GM12878 (cell line): ENCODE measurements at regions of chr12 and their contacts with region 1.

Region 1: GRCh38 chr12:69254046-69254445 is 14.7 kb downstream of the CPSF6 start:
- DNase-seq: peak; percentile 51
- ATAC-seq: peak; percentile 83
- H3K4me3 ChIP-seq: no peak overlapping the region
- H3K27ac ChIP-seq: no peak overlapping the region
- H3K4me1 ChIP-seq: no peaks in the 10 kb centered on the region
- H3K27me3 ChIP-seq: no peaks in the 10 kb centered on the region
- CTCF ChIP-seq: peak; percentile 51 to 77 (median 64); a peak in 5 of 6 replicates
- EP300 ChIP-seq: no peak
- POLR2A ChIP-seq: no peak
- RAD21 ChIP-seq: peak; percentile 76

Region 2: DNA sequence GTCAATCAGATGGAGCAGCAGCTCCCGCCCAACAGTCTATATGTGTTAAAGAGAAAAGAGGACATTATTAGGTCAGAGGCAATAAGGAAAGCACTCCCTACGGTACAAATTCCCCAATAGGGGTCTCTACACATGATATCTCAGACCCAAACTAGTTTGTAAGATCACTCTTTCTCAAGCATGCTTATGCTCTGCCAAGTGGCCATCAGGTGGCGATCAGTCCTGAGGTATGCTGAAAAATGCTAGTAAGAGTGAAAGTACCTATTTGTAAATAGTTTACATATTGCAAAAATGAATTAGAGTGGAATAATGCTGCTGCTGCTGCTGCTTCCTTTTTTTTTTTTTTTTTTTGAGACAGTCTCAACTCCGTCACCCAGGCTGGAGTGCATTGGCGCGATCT is 382.1 kb before region 1 on chr12:
- CTCF ChIA-PET with region 1: interaction called, 4 read pairs
- POLR2A ChIA-PET with region 1: no interaction called
- RAD21 ChIA-PET with region 1: no interaction called
- SMC1A ChIA-PET with region 1: interaction called, 3 read pairs
- in situ Hi-C with region 1: no loop called
- intact Hi-C with region 1: loop called (anchors 10 kb)
- DNase-seq: no peak
- ATAC-seq: peak; percentile 62; the same call in 2 of the 3 replicates
- H3K4me3 ChIP-seq: no peak overlapping the region
- H3K27ac ChIP-seq: no peak overlapping the region
- H3K4me1 ChIP-seq: no peaks in the 10 kb centered on the region
- H3K27me3 ChIP-seq: no peaks in the 10 kb centered on the region
- CTCF ChIP-seq: peak; percentile 29 to 48 (median 37); a peak in 4 of 6 replicates
- EP300 ChIP-seq: no peak
- POLR2A ChIP-seq: no peak
- RAD21 ChIP-seq: peak; percentile 52

Region 3: DNA sequence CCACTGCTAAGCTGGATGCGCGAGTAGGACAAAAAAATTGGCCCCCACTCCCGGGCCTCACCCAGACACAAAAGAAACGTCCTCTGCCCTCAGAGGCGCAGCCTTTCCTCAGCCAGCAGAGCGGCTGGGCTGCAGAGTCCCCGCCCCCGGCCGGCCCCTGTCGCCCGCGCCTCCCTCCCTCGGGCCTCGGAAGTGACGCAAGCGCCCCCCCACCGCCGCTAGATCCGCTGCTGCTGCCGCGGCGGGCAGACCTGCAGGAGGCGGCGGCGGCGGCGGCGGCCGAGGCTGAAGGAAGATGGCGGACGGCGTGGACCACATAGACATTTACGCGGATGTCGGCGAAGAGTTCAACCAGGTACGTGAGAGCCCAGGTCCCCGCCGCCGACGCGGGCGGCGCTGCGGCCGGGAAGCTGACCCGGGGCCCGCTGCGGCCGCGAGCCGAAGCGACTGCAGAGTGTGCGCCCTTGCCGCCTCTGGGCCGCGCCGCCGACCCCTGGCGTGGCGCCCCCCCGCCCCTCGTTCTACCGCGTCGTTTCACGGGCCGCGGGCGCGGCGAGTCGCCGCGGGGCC is 14.6 kb before region 1 on chr12 and contains the start of gene CPSF6:
- CTCF ChIA-PET with region 1: interaction called, 70 read pairs
- POLR2A ChIA-PET with region 1: interaction called, 8 read pairs
- RAD21 ChIA-PET with region 1: interaction called, 15 read pairs
- SMC1A ChIA-PET with region 1: interaction called, 51 read pairs
- in situ Hi-C with region 1: no loop called
- intact Hi-C with region 1: no loop called
- DNase-seq: peak; percentile 62
- ATAC-seq: peak; percentile 89
- H3K4me3 ChIP-seq: peak within 1 kb of the TSS; percentile 98
- H3K27ac ChIP-seq: peak within 1 kb of the TSS; percentile 81
- H3K4me1 ChIP-seq: peaks cover 14% of the 10 kb centered on the region
- H3K27me3 ChIP-seq: no peaks in the 10 kb centered on the region
- CTCF ChIP-seq: no peak
- EP300 ChIP-seq: no peak
- POLR2A ChIP-seq: peak; percentile 91
- RAD21 ChIP-seq: no peak
- polyA plus RNA-seq, gene CPSF6: 45.9 to 49.2 TPM

Region 4: DNA sequence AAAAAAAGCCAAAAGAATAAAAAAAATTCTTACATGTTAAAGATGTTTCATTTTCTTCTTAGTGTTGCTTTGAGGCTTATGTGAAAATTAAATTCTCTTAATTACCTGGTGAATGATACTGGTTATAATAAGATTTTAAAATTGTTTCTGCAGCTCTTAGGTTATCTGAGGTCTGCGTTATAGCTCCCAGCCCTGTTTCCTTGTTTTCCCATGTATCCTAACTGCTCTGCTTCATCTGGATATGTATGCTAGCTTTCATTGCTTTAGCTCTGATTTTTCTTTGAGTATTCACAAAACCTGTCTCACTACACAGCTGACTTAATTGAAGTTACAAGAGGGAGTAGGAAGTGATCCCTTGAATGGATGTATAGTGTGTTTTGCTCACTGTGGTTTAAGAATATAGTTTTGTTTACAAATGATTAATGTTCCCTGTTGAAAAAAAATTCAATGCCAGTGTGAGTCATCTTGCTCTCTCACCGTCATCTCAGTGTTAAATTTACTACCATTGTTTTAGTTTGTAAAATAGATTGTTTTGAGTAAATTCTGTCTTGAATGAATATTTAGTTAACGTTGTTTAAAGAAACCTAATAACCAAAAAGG is 12.1 kb after region 1 on chr12:
- CTCF ChIA-PET with region 1: interaction called, 16 read pairs
- POLR2A ChIA-PET with region 1: interaction called, 3 read pairs
- RAD21 ChIA-PET with region 1: interaction called, 11 read pairs
- SMC1A ChIA-PET with region 1: interaction called, 9 read pairs
- in situ Hi-C with region 1: no loop called
- intact Hi-C with region 1: no loop called
- DNase-seq: no peak
- ATAC-seq: peak; percentile 36; the same call in 1 of the 3 replicates
- H3K4me3 ChIP-seq: no peak overlapping the region
- H3K27ac ChIP-seq: no peak overlapping the region
- H3K4me1 ChIP-seq: no peaks in the 10 kb centered on the region
- H3K27me3 ChIP-seq: no peaks in the 10 kb centered on the region
- CTCF ChIP-seq: no peak
- EP300 ChIP-seq: no peak
- POLR2A ChIP-seq: no peak
- RAD21 ChIP-seq: no peak